IMR-90 (cell line): ENCODE measurements at regions of chr3 and their contacts with region 1.

Region 1: GRCh38 chr3:143040261-143040879 is 39.0 kb downstream of the U2SURP start:
- DNase-seq: peak; percentile 56
- ATAC-seq: peak; percentile 32; the same call in 1 of the 2 replicates
- H3K4me3 ChIP-seq: no peak overlapping the region
- H3K27ac ChIP-seq: no peak overlapping the region
- H3K4me1 ChIP-seq: no peaks in the 10 kb centered on the region
- H3K27me3 ChIP-seq: no peaks in the 10 kb centered on the region
- CTCF ChIP-seq: peak; percentile 50
- POLR2A ChIP-seq: no peak
- RAD21 ChIP-seq: peak; percentile 40

Region 2: GRCh38 chr3:143084856-143085731 is 44.7 kb after region 1 on chr3:
- CTCF ChIA-PET with region 1: no interaction called
- POLR2A ChIA-PET with region 1: no interaction called
- dilution Hi-C with region 1: no loop called
- in situ Hi-C with region 1: no loop called
- intact Hi-C with region 1: no loop called
- DNase-seq: peak; percentile 47
- ATAC-seq: peak; percentile 51
- H3K4me3 ChIP-seq: no peak overlapping the region
- H3K27ac ChIP-seq: no peak overlapping the region
- H3K4me1 ChIP-seq: no peaks in the 10 kb centered on the region
- H3K27me3 ChIP-seq: no peaks in the 10 kb centered on the region; the same call in 1 of the 2 replicates
- CTCF ChIP-seq: no peak
- POLR2A ChIP-seq: no peak
- RAD21 ChIP-seq: no peak

Region 3: DNA sequence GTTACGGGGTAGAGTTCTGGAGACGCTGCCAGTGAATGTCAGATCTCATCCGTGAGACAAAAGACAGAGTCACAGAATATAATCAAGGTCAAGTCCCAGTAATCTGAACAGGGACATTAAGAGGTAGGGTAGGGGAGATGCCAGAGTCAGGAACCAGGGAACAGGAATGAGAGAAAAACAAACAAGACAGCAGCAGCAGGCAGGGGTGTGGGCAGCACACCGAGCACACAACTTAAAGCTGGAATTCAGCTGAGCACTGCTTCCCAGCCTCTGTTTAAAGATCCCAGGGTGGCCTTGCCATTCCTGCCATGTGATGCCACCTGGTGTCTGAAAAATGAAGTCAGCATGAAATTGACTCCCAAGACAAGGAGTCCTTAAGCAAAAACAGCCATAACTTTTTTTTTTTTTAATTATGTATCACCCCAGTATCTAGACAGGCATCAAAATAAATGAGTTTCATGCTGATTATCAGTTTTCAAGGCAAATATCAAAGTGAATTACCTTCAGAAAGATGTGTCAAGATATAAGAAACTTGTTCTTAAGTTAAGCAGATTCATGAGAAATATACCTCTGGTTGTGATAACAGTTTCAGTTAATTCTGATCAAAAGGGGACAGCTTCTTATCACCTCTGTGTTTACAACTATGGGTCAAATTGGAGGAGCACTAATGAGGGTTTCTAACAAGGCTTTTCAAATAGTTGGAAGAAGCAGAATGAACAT is 604.2 kb after region 1 on chr3:
- CTCF ChIA-PET with region 1: no interaction called
- POLR2A ChIA-PET with region 1: no interaction called
- dilution Hi-C with region 1: no loop called
- in situ Hi-C with region 1: no loop called
- intact Hi-C with region 1: loop called (anchors 10 kb)
- DNase-seq: peak; percentile 59
- ATAC-seq: peak; percentile 91
- H3K4me3 ChIP-seq: no peak overlapping the region
- H3K27ac ChIP-seq: no peak overlapping the region
- H3K4me1 ChIP-seq: no peaks in the 10 kb centered on the region
- H3K27me3 ChIP-seq: no peaks in the 10 kb centered on the region
- CTCF ChIP-seq: peak; percentile 51
- POLR2A ChIP-seq: no peak
- RAD21 ChIP-seq: peak; percentile 73